A673 (cell line): ENCODE measurements at regions of chr16 and their contacts with region 1.

Region 1: DNA sequence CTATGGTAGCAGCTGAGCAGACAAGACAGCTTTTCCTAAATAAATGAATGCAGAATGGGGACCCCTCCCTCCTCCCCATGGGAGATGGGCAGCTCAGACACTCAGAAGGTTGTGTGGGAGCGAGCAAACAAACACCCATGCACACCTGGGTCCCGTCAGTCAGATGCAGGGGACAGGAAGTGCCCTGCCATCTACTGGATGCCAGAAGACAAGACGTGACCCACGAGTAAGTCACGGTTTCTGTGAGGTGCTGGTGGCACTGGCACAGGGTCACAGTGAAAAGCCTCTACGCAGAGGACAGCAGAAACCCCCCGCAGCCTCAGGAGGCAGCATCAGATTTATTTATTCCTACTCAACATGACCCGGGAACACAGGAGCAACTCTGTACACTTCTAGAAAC is 8.4 kb downstream of the HBQ1 start:
- DNase-seq: no peak
- H3K4me3 ChIP-seq: no peak overlapping the region
- H3K27ac ChIP-seq: no peak overlapping the region
- H3K4me1 ChIP-seq: no peaks in the 10 kb centered on the region
- H3K27me3 ChIP-seq: no peaks in the 10 kb centered on the region
- CTCF ChIP-seq: peak; percentile 34

Region 2: DNA sequence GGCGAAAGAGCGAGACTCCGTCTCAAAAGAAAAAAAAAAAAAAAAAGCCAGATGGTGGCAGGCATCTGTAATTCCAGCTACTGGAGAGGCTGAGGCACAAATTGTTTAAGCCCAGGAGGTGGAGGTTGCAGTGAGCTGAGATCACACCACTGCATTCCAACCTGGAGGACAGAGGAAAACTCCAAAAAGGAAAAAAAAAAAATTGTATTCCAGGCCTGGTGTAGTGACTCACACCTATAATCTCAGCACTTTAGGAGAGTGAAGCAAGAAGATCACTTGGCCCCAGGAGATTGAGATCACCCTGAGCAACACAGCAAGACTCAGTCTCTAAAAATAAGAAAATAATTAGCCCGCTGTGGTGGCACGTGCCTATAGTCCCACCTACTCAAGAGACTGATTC is 11.7 kb after region 1 on chr16:
- CTCF ChIA-PET with region 1: interaction called, 3 read pairs
- POLR2A ChIA-PET with region 1: interaction called, 18 read pairs
- intact Hi-C with region 1: no loop called
- DNase-seq: peak; percentile 30
- H3K4me3 ChIP-seq: no peak overlapping the region
- H3K27ac ChIP-seq: no peak overlapping the region
- H3K4me1 ChIP-seq: peaks cover 4% of the 10 kb centered on the region
- H3K27me3 ChIP-seq: no peaks in the 10 kb centered on the region
- CTCF ChIP-seq: no peak

Region 3: GRCh38 chr16:1579201-1579600 is 1390.5 kb after region 1 on chr16:
- CTCF ChIA-PET with region 1: no interaction called
- POLR2A ChIA-PET with region 1: interaction called, 25 read pairs
- intact Hi-C with region 1: no loop called
- DNase-seq: no peak
- H3K4me3 ChIP-seq: no peak overlapping the region
- H3K27ac ChIP-seq: no peak overlapping the region
- H3K4me1 ChIP-seq: no peaks in the 10 kb centered on the region
- H3K27me3 ChIP-seq: no peaks in the 10 kb centered on the region
- CTCF ChIP-seq: no peak